ENCODE measurements at regions of chr5 and their contacts with region 1.

Region 1: DNA sequence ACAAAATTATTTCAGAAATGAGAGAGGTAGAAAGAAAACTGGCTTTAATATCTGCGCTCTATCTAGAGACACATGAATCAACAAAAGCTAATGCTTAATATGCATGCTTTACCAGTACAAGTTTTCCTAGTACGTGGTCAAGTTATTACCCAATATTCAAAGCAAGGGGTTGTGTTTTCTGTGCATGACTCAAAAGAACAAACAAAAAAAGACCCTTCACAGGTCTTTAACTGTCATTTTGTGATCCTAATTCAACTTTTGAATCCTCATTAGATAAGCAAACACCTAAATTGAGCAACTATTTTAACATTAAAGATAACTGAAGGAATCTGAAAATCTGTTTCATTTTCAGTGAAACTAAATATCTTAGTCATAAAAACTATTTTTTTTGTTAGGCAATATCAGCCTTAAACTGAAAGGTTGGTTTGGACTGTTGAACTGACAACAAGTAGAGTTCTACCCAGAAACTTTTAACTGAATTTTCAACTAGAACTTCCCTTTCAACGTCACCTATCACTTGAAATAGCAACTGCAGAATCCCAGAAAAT is 12.5 kb downstream of the ST8SIA4 start:
- DNase-seq: no peak
- H3K4me3 Mint-ChIP-seq: peak overlapping the region; percentile 52
- H3K27ac Mint-ChIP-seq: peak overlapping the region; percentile 70
- H3K4me1 Mint-ChIP-seq: peaks cover 53% of the 10 kb centered on the region
- H3K27me3 Mint-ChIP-seq: no peaks in the 10 kb centered on the region

Region 2: DNA sequence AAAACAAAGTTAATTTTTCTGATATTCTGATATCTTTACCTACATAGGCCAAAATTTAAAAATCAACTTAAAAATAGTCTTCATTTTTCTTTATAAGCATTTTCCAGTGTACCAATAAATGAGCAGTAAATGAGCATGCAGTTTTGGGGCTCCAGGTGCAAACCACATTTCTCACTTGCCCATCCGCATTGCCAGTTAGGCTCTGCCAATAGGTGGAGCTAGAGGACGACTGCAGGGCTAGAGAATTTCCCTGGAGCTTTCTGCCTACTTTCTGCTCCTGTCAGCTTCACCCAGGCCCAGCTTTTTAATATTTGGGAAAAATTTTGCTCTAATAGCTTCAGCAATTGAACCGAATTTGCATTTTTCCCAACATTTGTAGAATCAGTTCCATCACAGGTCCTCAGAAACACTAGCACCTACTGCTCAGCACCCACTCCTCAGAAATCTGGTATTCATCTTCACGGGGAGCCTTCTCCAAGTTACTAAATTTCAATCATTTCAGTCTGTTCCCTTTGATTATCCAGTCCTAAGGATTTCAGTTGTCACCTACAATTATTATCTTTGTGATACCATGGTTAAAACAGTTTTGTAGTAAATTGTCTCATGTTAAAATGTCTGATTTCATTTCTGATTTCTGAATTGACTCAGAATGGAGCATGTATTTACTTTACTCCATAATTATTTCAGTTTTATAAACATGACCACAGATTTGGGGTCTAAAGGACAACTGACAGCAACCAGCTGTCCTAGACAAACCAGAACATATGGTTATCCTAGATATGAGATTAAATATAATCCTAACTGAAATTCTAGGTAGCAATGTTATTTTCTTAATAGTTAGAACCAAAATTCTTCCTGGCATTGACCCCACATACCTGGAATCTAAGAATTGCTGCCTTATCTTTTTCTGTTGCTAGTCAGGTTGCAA is 460.0 kb before region 1 on chr5:
- CTCF ChIA-PET with region 1: no interaction called
- intact Hi-C with region 1: no loop called
- DNase-seq: peak; percentile 65
- H3K4me3 Mint-ChIP-seq: no peak overlapping the region
- H3K27ac Mint-ChIP-seq: no peak overlapping the region
- H3K4me1 Mint-ChIP-seq: no peaks in the 10 kb centered on the region
- H3K27me3 Mint-ChIP-seq: no peaks in the 10 kb centered on the region

Region 3: GRCh38 chr5:100584069-100584468 is 306.5 kb before region 1 on chr5:
- CTCF ChIA-PET with region 1: no interaction called
- intact Hi-C with region 1: no loop called
- DNase-seq: no peak
- H3K4me3 Mint-ChIP-seq: no peak overlapping the region
- H3K27ac Mint-ChIP-seq: no peak overlapping the region
- H3K4me1 Mint-ChIP-seq: no peaks in the 10 kb centered on the region
- H3K27me3 Mint-ChIP-seq: no peaks in the 10 kb centered on the region

Region 4: DNA sequence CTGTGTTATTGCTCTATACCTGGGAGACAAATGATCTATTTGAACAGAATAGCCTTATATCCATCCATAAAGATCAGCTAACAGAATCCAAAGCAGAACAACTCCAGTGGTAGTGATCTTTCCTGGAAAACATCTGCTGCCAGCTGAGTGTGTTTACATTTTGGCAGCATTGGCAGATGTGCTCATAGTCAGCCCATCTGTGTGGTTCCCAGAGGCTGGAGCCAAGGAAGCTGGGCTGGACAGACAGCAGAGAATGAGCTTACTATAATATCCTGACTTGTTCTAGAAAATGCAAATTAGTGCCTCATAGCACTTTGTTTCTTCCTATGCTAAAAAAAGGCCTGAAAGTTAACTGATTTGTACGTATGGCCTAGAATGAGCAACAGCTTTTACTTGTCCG is 87.1 kb before region 1 on chr5:
- CTCF ChIA-PET with region 1: no interaction called
- intact Hi-C with region 1: no loop called
- DNase-seq: no peak
- H3K4me3 Mint-ChIP-seq: no peak overlapping the region
- H3K27ac Mint-ChIP-seq: no peak overlapping the region
- H3K4me1 Mint-ChIP-seq: no peaks in the 10 kb centered on the region
- H3K27me3 Mint-ChIP-seq: no peaks in the 10 kb centered on the region

Region 5: DNA sequence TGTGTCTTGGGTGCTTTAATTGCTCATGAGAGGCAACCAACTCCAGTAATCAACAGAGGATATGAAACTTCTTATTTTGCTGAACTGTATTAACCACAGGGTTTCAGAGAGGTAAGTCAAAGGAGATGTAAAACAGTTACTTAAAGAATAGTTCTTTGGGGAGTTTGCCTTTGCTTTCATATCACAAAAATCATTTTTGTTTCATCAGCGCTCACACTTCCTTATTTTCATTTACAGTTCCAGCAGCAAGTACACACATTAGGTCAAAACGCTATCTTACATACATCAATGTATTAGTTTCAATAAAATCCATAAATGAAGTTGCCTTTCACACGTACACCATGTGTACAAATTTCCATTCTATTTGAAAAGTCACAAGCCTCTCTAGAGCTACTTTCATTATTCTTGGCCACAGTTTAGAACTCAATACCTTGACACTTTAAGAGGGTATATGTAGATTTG is 37.5 kb before region 1 on chr5:
- CTCF ChIA-PET with region 1: interaction called, 3 read pairs
- intact Hi-C with region 1: loop called (anchors 1 kb)
- DNase-seq: no peak
- H3K4me3 Mint-ChIP-seq: peak overlapping the region; percentile 51
- H3K27ac Mint-ChIP-seq: peak overlapping the region; percentile 73
- H3K4me1 Mint-ChIP-seq: peaks cover 34% of the 10 kb centered on the region
- H3K27me3 Mint-ChIP-seq: no peaks in the 10 kb centered on the region

Region 6: GRCh38 chr5:100860407-100860806 is 30.1 kb before region 1 on chr5:
- CTCF ChIA-PET with region 1: no interaction called
- intact Hi-C with region 1: loop called (anchors 1 kb)
- DNase-seq: no peak
- H3K4me3 Mint-ChIP-seq: no peak overlapping the region
- H3K27ac Mint-ChIP-seq: no peak overlapping the region
- H3K4me1 Mint-ChIP-seq: peaks cover 43% of the 10 kb centered on the region
- H3K27me3 Mint-ChIP-seq: no peaks in the 10 kb centered on the region

Region 7: DNA sequence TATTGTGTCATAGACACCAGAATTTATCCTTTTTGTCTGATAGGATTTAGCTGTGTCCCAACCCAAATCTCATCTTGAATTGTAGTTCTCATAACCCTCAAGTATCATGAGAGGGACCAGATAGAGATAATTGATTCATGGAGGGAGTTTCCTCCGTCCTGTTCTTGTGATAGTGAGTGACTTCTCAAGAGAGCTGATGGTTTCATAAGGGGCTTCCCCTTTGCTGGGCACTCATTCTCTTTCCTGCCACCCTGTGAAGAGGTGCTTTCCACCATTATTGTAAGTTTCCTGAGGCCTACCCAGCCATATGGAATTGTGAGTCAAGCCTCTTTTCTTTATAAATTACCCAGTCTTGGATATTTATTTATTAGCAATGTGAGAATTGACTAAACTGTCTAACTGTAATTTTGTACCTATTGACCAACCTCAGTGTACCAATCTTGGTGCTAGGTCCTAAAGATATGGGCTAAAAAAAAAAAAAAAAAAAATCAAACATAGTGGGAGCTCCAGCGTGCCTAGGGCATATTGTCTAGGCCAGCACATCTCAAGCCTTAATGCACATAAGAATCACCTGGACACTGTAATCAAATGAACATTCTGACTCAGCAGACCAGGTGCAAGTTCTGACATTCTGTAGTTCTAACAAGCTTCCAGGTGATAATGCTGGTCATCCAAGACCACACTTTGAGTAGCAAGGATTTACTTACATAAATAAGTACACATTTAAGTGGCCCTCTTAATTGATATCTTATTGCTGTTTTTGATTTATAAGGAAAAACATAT is 17.9 kb before region 1 on chr5:
- CTCF ChIA-PET with region 1: no interaction called
- intact Hi-C with region 1: loop called (anchors 1 kb)
- DNase-seq: peak; percentile 65
- H3K4me3 Mint-ChIP-seq: no peak overlapping the region
- H3K27ac Mint-ChIP-seq: peak overlapping the region; percentile 64
- H3K4me1 Mint-ChIP-seq: peaks cover 43% of the 10 kb centered on the region
- H3K27me3 Mint-ChIP-seq: no peaks in the 10 kb centered on the region

Region 8: DNA sequence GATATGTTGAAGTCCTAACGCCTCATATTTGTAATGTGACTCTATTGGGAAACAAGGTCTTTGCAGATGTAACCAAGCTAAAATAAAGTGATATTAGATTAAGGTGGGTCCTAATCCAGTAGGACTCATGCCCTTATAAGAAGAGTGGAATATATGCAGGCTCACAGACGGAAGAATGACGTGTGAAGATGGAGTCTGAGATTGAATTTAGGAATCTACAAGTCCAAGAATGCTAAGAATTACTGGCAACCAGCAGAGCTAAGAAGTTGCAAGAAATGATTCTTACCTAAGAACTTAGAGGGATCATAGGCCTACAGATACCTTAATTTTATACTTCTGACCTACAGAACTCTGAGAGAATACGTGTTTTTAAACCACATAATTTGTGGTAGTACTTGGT is 362.6 kb after region 1 on chr5:
- CTCF ChIA-PET with region 1: no interaction called
- intact Hi-C with region 1: no loop called
- DNase-seq: no peak
- H3K4me3 Mint-ChIP-seq: no peak overlapping the region
- H3K27ac Mint-ChIP-seq: no peak overlapping the region
- H3K4me1 Mint-ChIP-seq: no peaks in the 10 kb centered on the region
- H3K27me3 Mint-ChIP-seq: no peaks in the 10 kb centered on the region

Measured in activated naive CD4-positive, alpha-beta T cell treated with anti-CD3 and anti-CD28 coated beads for 36 hours (primary cell).